SK-N-SH (cell line): ENCODE measurements at regions of chr9 and their contacts with region 1.

Region 1: DNA sequence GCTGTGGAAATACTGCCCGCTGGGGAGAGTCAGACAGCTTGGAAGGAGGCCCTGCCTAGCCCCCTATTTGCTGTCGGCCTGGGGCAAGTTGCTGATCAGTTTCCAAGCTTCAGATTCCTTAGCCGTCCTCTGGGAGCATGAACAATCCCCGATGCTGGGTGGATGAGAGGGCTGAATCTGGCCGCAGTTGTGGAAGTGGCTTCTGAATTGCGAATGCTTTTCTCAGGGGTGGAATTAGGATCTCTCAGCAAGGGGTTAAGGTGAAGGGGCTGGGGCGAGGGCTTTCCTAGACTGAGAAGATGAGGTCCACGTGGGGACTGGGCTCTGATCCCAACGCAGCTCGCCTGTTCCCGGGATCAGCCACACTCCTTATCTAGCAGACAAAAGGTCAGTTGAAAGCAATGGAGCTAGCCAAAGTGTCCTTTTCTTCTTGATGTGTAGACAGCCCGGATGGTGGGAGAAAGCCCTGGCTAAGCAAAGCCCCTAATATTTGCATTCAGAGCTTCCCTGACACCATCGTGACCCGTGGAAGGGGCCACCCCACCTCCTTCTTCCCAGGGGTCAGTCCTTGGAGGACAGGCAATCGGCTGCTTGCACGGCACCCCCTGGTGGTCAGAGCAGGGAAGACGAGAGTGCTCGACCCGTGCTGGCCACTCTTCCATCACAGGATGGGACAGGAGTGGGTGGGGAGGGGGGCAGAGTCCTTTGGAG is 54.9 kb downstream of the COL15A1 start:
- DNase-seq: peak; percentile 87
- H3K4me3 ChIP-seq: peak overlapping the region in 1 of 2 experiments; percentile 27; a peak in 1 of 4 replicates
- H3K27ac ChIP-seq: no peak overlapping the region
- H3K4me1 ChIP-seq: peaks cover 0 to 6% of the 10 kb centered on the region in 2 experiments; a peak in 1 of 4 replicates
- H3K27me3 ChIP-seq: no peaks in the 10 kb centered on the region
- CTCF ChIP-seq: peak; percentile 86
- EP300 ChIP-seq: no peak
- RAD21 ChIP-seq: peak; percentile 73

Region 2: DNA sequence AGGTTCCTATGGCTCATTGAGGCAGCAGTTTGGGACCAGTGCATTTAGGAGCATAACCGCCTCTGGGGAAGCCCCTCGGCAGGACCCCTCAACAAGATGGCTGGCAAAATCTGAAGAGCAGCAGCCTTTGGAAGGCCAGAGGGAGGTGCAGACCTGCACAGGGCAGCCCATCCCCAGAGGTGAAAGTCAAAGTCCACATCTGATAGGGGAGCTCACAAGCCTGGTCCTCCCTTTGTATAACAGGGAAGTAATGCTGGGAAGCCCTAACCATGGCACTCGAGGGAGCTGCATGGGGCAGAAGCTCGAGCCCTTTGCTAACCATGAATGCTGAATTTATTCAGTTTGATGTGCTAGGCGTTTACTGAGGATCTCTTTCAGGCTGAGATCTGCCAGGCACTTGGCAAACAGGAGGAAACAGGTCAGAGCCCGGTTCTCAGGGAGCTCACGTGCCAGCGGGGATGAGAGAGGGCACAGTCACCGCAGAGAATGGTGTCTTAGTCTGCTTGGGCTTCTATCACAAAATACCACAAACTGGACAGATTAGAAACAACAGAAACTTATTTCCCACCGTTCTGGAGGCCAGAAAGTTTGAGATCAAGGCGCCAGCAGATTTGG is 403.9 kb before region 1 on chr9:
- CTCF ChIA-PET with region 1: no interaction called
- POLR2A ChIA-PET with region 1: no interaction called
- DNase-seq: no peak
- H3K4me3 ChIP-seq: no peak overlapping the region
- H3K27ac ChIP-seq: no peak overlapping the region
- H3K4me1 ChIP-seq: no peaks in the 10 kb centered on the region
- H3K27me3 ChIP-seq: no peaks in the 10 kb centered on the region; the same call in 1 of the 2 replicates
- CTCF ChIP-seq: no peak
- EP300 ChIP-seq: no peak
- RAD21 ChIP-seq: no peak

Region 3: GRCh38 chr9:98821831-98822230 is 176.8 kb before region 1 on chr9:
- CTCF ChIA-PET with region 1: no interaction called
- POLR2A ChIA-PET with region 1: no interaction called
- DNase-seq: no peak
- H3K4me3 ChIP-seq: no peak overlapping the region
- H3K27ac ChIP-seq: no peak overlapping the region
- H3K4me1 ChIP-seq: no peaks in the 10 kb centered on the region
- H3K27me3 ChIP-seq: no peaks in the 10 kb centered on the region
- CTCF ChIP-seq: no peak
- EP300 ChIP-seq: no peak
- RAD21 ChIP-seq: no peak

Region 4: GRCh38 chr9:98838155-98838867 is 160.3 kb before region 1 on chr9:
- CTCF ChIA-PET with region 1: interaction called, 20 read pairs
- POLR2A ChIA-PET with region 1: no interaction called
- DNase-seq: no peak
- H3K4me3 ChIP-seq: no peak overlapping the region
- H3K27ac ChIP-seq: no peak overlapping the region
- H3K4me1 ChIP-seq: no peaks in the 10 kb centered on the region
- H3K27me3 ChIP-seq: no peaks in the 10 kb centered on the region
- CTCF ChIP-seq: no peak
- EP300 ChIP-seq: no peak
- RAD21 ChIP-seq: no peak

Region 5: GRCh38 chr9:98860871-98861293 is 137.7 kb before region 1 on chr9:
- CTCF ChIA-PET with region 1: interaction called, 10 read pairs
- POLR2A ChIA-PET with region 1: no interaction called
- DNase-seq: peak; percentile 49
- H3K4me3 ChIP-seq: no peak overlapping the region
- H3K27ac ChIP-seq: no peak overlapping the region
- H3K4me1 ChIP-seq: peaks cover 0 to 3% of the 10 kb centered on the region in 2 experiments; a peak in 2 of 4 replicates
- H3K27me3 ChIP-seq: no peaks in the 10 kb centered on the region
- CTCF ChIP-seq: peak; percentile 74
- EP300 ChIP-seq: no peak
- RAD21 ChIP-seq: peak; percentile 77

Region 6: GRCh38 chr9:98974994-98975712 is 23.4 kb before region 1 on chr9:
- CTCF ChIA-PET with region 1: interaction called, 57 read pairs
- POLR2A ChIA-PET with region 1: no interaction called
- DNase-seq: peak; percentile 89
- H3K4me3 ChIP-seq: peak overlapping the region; percentile 31 to 32
- H3K27ac ChIP-seq: no peak overlapping the region
- H3K4me1 ChIP-seq: peaks cover 5 to 9% of the 10 kb centered on the region in 2 experiments; a peak in 1 of 4 replicates
- H3K27me3 ChIP-seq: no peaks in the 10 kb centered on the region
- CTCF ChIP-seq: peak; percentile 94
- EP300 ChIP-seq: no peak
- RAD21 ChIP-seq: peak; percentile 80

Region 7: GRCh38 chr9:99140685-99141314 is 142.2 kb after region 1 on chr9:
- CTCF ChIA-PET with region 1: interaction called, 131 read pairs
- POLR2A ChIA-PET with region 1: no interaction called
- DNase-seq: peak; percentile 46
- H3K4me3 ChIP-seq: no peak overlapping the region
- H3K27ac ChIP-seq: no peak overlapping the region
- H3K4me1 ChIP-seq: no peaks in the 10 kb centered on the region; a peak in 1 of 4 replicates
- H3K27me3 ChIP-seq: no peaks in the 10 kb centered on the region
- CTCF ChIP-seq: peak; percentile 88
- EP300 ChIP-seq: no peak
- RAD21 ChIP-seq: peak; percentile 90